A673 (cell line): ENCODE measurements at regions of chr4 and their contacts with region 1.

Region 1: DNA sequence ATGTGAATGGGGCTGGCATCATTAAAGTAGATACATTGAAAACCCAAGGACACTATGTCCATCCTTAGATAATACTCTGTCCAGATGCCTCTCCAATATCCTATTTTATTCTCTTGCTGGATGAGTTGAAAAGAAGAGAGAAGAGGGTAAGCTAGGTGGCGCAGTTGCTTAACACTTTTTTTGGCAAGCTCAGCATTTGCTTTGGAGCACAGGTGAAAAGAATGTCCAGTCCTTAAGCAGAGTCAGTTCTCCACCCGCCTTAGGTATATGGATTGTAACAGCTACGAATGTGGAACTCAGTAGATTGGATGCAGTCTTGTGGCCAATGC is 208.4 kb downstream of the NWD2 start:
- DNase-seq: peak; percentile 55
- H3K4me3 ChIP-seq: no peak overlapping the region
- H3K27ac ChIP-seq: no peak overlapping the region
- H3K4me1 ChIP-seq: peaks cover 5% of the 10 kb centered on the region
- H3K27me3 ChIP-seq: peaks cover 89% of the 10 kb centered on the region
- CTCF ChIP-seq: peak; percentile 74

Region 2: GRCh38 chr4:37400241-37400881 is 52.6 kb before region 1 on chr4:
- CTCF ChIA-PET with region 1: no interaction called
- POLR2A ChIA-PET with region 1: no interaction called
- intact Hi-C with region 1: no loop called
- DNase-seq: no peak
- H3K4me3 ChIP-seq: no peak overlapping the region
- H3K27ac ChIP-seq: no peak overlapping the region
- H3K4me1 ChIP-seq: no peaks in the 10 kb centered on the region
- H3K27me3 ChIP-seq: no peaks in the 10 kb centered on the region
- CTCF ChIP-seq: no peak

Region 3: GRCh38 chr4:37561803-37562207 is 108.9 kb after region 1 on chr4:
- CTCF ChIA-PET with region 1: no interaction called
- POLR2A ChIA-PET with region 1: no interaction called
- intact Hi-C with region 1: loop called (anchors 1 kb)
- DNase-seq: peak; percentile 4
- H3K4me3 ChIP-seq: no peak overlapping the region
- H3K27ac ChIP-seq: no peak overlapping the region
- H3K4me1 ChIP-seq: no peaks in the 10 kb centered on the region
- H3K27me3 ChIP-seq: no peaks in the 10 kb centered on the region
- CTCF ChIP-seq: no peak

Region 4: DNA sequence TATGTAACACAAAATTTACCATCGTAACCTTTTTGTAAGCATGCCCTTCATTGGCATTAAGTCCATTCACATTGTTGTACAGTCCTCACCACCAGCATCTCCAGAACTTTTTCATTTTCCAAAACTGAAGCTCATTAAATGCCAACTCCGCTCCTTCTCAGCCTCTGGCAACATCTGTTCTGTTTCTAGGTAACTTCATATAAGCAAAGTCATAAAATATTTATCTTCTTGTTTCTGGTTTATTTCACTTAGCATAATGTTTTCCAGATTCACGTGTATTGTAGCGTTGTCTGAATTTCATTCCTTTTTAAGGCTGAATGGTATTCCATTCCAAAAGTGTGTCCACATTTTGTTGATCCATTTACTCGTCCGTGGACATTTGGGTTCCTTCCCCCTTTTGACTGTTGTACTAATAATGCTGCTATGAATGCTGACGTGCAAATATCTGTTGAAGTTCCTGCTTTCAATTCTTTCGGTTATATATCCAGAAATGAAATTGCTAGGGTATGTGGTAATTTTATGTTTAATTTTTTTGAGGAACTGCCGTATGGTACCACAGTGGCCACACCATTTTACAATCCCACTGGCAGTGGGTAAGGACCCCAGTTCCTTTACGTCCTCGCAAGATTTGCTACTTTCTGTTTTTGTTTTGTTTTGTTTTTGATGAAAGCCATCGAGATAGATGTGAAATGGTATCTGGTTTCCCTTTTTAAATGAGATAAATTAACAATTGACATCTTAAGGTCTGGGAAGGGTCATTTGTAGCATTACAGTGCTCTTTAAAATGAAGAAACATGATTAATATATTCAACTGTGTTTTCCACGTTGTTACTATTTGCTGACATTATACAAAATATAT is 570.7 kb after region 1 on chr4:
- CTCF ChIA-PET with region 1: no interaction called
- POLR2A ChIA-PET with region 1: no interaction called
- intact Hi-C with region 1: no loop called
- DNase-seq: no peak
- H3K4me3 ChIP-seq: no peak overlapping the region
- H3K27ac ChIP-seq: no peak overlapping the region
- H3K4me1 ChIP-seq: no peaks in the 10 kb centered on the region
- H3K27me3 ChIP-seq: no peaks in the 10 kb centered on the region
- CTCF ChIP-seq: no peak

Region 5: GRCh38 chr4:38034986-38035882 is 582.3 kb after region 1 on chr4:
- CTCF ChIA-PET with region 1: no interaction called
- POLR2A ChIA-PET with region 1: no interaction called
- intact Hi-C with region 1: loop called (anchors 10 kb)
- DNase-seq: peak; percentile 79
- H3K4me3 ChIP-seq: no peak overlapping the region
- H3K27ac ChIP-seq: no peak overlapping the region
- H3K4me1 ChIP-seq: no peaks in the 10 kb centered on the region
- H3K27me3 ChIP-seq: no peaks in the 10 kb centered on the region
- CTCF ChIP-seq: peak; percentile 74